PC-9 (cell line): ENCODE measurements at regions of chr4 and their contacts with region 1.

Region 1: GRCh38 chr4:108937066-108937465 is 174.2 kb upstream of the ETNPPL start:
- DNase-seq: no peak
- H3K4me3 ChIP-seq: no peak overlapping the region
- H3K27ac ChIP-seq: no peak overlapping the region
- H3K4me1 ChIP-seq: no peaks in the 10 kb centered on the region
- H3K27me3 ChIP-seq: no peaks in the 10 kb centered on the region
- CTCF ChIP-seq: no peak

Region 2: GRCh38 chr4:108849611-108850168 is 87.4 kb before region 1 on chr4:
- CTCF ChIA-PET with region 1: no interaction called
- POLR2A ChIA-PET with region 1: no interaction called
- intact Hi-C with region 1: loop called (anchors 10 kb)
- DNase-seq: peak; percentile 2 to 59
- H3K4me3 ChIP-seq: no peak overlapping the region
- H3K27ac ChIP-seq: peak overlapping the region; percentile 26; the same call in 1 of the 2 replicates
- H3K4me1 ChIP-seq: peaks cover 13% of the 10 kb centered on the region; the same call in 1 of the 2 replicates
- H3K27me3 ChIP-seq: no peaks in the 10 kb centered on the region
- CTCF ChIP-seq: no peak